Activated naive CD4-positive, alpha-beta T cell treated with anti-CD3 and anti-CD28 coated beads for 36 hours (primary cell): ENCODE measurements at regions of chr6 and their contacts with region 1.

Region 1: GRCh38 chr6:16704401-16705045 is 56.7 kb downstream of the ATXN1 start:
- DNase-seq: peak; percentile 76
- H3K4me3 Mint-ChIP-seq: peak overlapping the region; percentile 46
- H3K27ac Mint-ChIP-seq: peak overlapping the region; percentile 28
- H3K4me1 Mint-ChIP-seq: peaks cover 60% of the 10 kb centered on the region
- H3K27me3 Mint-ChIP-seq: no peaks in the 10 kb centered on the region

Region 2: GRCh38 chr6:16690608-16691198 is 13.8 kb before region 1 on chr6:
- CTCF ChIA-PET with region 1: interaction called, 13 read pairs
- intact Hi-C with region 1: loop called (anchors 1 kb)
- DNase-seq: no peak
- H3K4me3 Mint-ChIP-seq: no peak overlapping the region
- H3K27ac Mint-ChIP-seq: peak overlapping the region; percentile 59
- H3K4me1 Mint-ChIP-seq: peaks cover 77% of the 10 kb centered on the region
- H3K27me3 Mint-ChIP-seq: no peaks in the 10 kb centered on the region